CD4-positive, alpha-beta memory T cell (primary cell): ENCODE measurements at regions of chr2 and their contacts with region 1.

Region 1: DNA sequence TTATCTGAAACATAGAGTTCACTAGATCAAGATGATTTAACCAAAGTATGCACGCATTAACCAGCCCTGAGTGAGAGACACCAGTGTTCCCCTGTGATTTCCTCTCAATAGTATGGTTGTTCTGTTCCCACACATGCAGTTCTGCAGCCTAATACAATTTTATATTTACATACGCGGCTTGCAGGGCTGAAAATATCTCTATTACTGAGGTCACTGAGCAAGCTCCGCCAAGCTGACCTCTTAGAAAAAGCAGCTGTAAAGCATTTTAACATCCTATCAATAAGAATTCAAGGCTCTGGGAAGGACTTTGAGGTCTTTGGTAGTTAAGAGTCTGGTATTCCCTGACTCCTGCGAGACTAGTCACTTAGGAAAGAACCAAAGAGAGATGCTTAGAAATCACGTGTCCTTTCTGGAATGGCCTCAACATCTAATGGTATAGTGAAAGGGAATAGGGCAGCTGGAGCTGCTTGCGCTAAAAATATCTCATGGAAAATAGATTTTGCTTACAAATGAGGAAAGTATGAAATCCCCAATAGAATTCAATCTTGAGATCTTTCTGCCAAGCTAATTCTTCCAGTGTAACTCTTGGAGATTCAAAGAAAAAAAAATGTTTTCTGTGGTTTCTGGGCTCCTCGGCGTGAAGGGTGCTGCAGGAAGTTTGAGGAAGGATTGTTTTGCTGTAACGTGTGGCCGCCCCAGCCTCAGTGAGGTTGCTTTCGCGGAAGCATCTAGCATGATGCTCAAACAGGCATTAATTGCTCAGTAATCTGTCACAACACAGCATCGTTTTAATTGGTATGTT is 59.2 kb downstream of the DOCK10 start:
- DNase-seq: peak in 4 of 5 donors; percentile 25 to 45 (median 39)
- H3K4me3 ChIP-seq: no peak overlapping the region
- H3K4me3 Mint-ChIP-seq: peak overlapping the region; percentile 29 to 86 (median 80)
- H3K27ac ChIP-seq: peak overlapping the region; percentile 18
- H3K27ac Mint-ChIP-seq: peak overlapping the region; percentile 79 to 95 (median 92)
- H3K4me1 ChIP-seq: peaks cover 69% of the 10 kb centered on the region
- H3K4me1 Mint-ChIP-seq: peaks cover 59 to 88% (median 73%) of the 10 kb centered on the region in 4 donors
- H3K27me3 ChIP-seq: no peaks in the 10 kb centered on the region
- H3K27me3 Mint-ChIP-seq: no peaks in the 10 kb centered on the region

Region 2: GRCh38 chr2:224555823-224556366 is 427.2 kb before region 1 on chr2:
- CTCF ChIA-PET with region 1: no interaction called
- POLR2A ChIA-PET with region 1: no interaction called
- intact Hi-C with region 1: no loop called
- DNase-seq: no peak
- H3K4me3 ChIP-seq: no peak overlapping the region
- H3K4me3 Mint-ChIP-seq: no peak overlapping the region
- H3K27ac ChIP-seq: no peak overlapping the region
- H3K27ac Mint-ChIP-seq: peak overlapping the region in 1 of 7 donors; percentile 72
- H3K4me1 ChIP-seq: peaks cover 25% of the 10 kb centered on the region
- H3K4me1 Mint-ChIP-seq: peaks cover 33 to 45% (median 38%) of the 10 kb centered on the region in 4 donors
- H3K27me3 ChIP-seq: no peaks in the 10 kb centered on the region
- H3K27me3 Mint-ChIP-seq: no peaks in the 10 kb centered on the region

Region 3: GRCh38 chr2:224946895-224947294 is 36.2 kb before region 1 on chr2:
- CTCF ChIA-PET with region 1: interaction called, 4 read pairs
- POLR2A ChIA-PET with region 1: interaction called, 9 read pairs
- intact Hi-C with region 1: loop called (anchors 5 kb)
- DNase-seq: peak; percentile 59 to 75 (median 66)
- H3K4me3 ChIP-seq: peak overlapping the region; percentile 59 to 64
- H3K4me3 Mint-ChIP-seq: peak overlapping the region; percentile 84 to 95 (median 92)
- H3K27ac ChIP-seq: peak overlapping the region; percentile 75
- H3K27ac Mint-ChIP-seq: peak overlapping the region; percentile 89 to 98 (median 94)
- H3K4me1 ChIP-seq: peaks cover 81% of the 10 kb centered on the region
- H3K4me1 Mint-ChIP-seq: peaks cover 55 to 85% (median 72%) of the 10 kb centered on the region in 4 donors
- H3K27me3 ChIP-seq: no peaks in the 10 kb centered on the region
- H3K27me3 Mint-ChIP-seq: no peaks in the 10 kb centered on the region

Region 4: DNA sequence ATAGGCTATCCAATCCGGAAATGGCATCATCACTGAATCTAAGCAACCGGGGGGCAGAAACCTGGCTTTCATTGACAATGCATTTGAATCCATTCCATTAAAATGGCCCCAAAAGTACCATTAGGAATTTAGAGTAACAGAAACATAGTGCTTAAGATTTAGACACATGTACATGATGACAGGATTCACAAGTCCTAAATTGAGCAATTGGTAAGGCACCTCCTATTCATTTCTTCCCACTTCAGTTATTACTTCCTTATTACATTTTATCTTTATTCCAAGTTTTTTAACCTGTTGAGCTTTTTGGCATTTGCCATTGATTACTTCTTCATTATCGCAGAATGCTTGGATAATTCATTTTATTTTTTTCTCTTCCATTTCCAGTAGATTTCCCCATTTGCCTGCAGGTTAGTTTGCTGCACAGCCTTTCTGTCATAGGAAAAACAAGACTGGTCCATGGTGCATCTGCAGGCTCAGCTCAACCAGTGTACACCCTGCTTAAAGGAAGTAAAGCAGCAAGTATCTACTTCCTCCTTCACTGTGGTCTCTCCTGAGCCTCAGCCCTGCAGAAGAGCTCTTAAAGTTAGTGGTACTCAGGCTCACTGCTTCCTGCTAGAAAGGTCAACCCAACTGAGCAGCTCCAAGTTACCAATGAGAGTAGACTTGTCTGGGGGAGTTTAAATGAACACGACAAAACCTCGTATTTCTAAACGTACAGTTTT is 30.0 kb before region 1 on chr2:
- CTCF ChIA-PET with region 1: interaction called, 4 read pairs
- POLR2A ChIA-PET with region 1: interaction called, 11 read pairs
- intact Hi-C with region 1: loop called (anchors 5 kb)
- DNase-seq: peak; percentile 43 to 60 (median 51)
- H3K4me3 ChIP-seq: no peak overlapping the region
- H3K4me3 Mint-ChIP-seq: peak overlapping the region in 7 of 8 donors; percentile 35 to 75 (median 63)
- H3K27ac ChIP-seq: peak overlapping the region; percentile 11
- H3K27ac Mint-ChIP-seq: peak overlapping the region; percentile 65 to 88 (median 77)
- H3K4me1 ChIP-seq: peaks cover 88% of the 10 kb centered on the region
- H3K4me1 Mint-ChIP-seq: peaks cover 61 to 95% (median 76%) of the 10 kb centered on the region in 4 donors
- H3K27me3 ChIP-seq: no peaks in the 10 kb centered on the region
- H3K27me3 Mint-ChIP-seq: no peaks in the 10 kb centered on the region

Region 5: DNA sequence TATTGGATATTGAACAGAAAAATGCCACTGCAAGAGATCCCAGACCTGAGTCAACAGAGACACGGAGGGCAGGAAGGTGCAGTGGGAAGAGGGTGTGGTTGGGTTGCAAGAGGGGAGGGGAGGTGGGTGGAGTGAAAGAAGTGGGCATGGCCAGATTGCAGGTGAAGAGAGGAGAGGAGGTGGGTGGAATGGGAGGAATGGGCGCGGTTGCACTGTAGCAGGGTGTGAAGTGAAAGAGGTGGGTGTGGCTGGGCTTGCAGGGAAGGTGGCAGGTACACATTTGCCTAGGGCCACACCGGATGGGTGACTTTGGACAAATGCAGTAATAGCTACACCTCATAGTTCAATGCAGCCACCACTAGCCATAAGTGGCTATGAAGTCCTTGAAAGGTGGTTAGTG is 11.9 kb before region 1 on chr2:
- CTCF ChIA-PET with region 1: interaction called, 5 read pairs
- POLR2A ChIA-PET with region 1: interaction called, 8 read pairs
- intact Hi-C with region 1: loop called (anchors 2 kb)
- DNase-seq: peak in 1 of 5 donors; percentile 53
- H3K4me3 ChIP-seq: no peak overlapping the region
- H3K4me3 Mint-ChIP-seq: peak overlapping the region in 6 of 8 donors; percentile 49 to 63 (median 54)
- H3K27ac ChIP-seq: no peak overlapping the region
- H3K27ac Mint-ChIP-seq: peak overlapping the region in 6 of 7 donors; percentile 45 to 86 (median 78)
- H3K4me1 ChIP-seq: peaks cover 56% of the 10 kb centered on the region
- H3K4me1 Mint-ChIP-seq: peaks cover 55 to 81% (median 69%) of the 10 kb centered on the region in 4 donors
- H3K27me3 ChIP-seq: no peaks in the 10 kb centered on the region
- H3K27me3 Mint-ChIP-seq: no peaks in the 10 kb centered on the region

Region 6: DNA sequence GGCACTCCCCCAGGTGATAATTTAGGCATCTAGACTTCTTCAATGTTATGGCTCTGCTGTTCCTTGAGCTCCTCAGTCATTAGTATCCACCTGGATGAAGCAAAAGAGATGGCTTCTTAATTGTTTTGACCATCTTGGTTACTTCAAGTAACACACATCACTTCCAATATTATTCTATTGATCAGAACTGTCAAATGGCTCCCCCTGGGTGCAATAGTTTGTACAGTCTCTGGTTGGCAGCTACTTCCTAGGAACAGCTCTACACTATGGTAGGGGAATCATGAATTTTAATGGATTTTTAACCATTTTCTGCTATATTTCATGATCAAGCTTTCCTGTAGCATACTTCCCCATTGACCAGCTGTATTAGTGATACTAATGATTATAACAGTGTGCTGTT is 573.4 kb after region 1 on chr2:
- CTCF ChIA-PET with region 1: no interaction called
- POLR2A ChIA-PET with region 1: no interaction called
- intact Hi-C with region 1: no loop called
- DNase-seq: no peak
- H3K4me3 ChIP-seq: no peak overlapping the region
- H3K4me3 Mint-ChIP-seq: no peak overlapping the region
- H3K27ac ChIP-seq: no peak overlapping the region
- H3K27ac Mint-ChIP-seq: no peak overlapping the region
- H3K4me1 ChIP-seq: no peaks in the 10 kb centered on the region
- H3K4me1 Mint-ChIP-seq: no peaks in the 10 kb centered on the region
- H3K27me3 ChIP-seq: no peaks in the 10 kb centered on the region
- H3K27me3 Mint-ChIP-seq: peaks cover 9 to 20% of the 10 kb centered on the region in 2 donors